ENCODE measurements at regions of chrX and their contacts with region 1.

Region 1: DNA sequence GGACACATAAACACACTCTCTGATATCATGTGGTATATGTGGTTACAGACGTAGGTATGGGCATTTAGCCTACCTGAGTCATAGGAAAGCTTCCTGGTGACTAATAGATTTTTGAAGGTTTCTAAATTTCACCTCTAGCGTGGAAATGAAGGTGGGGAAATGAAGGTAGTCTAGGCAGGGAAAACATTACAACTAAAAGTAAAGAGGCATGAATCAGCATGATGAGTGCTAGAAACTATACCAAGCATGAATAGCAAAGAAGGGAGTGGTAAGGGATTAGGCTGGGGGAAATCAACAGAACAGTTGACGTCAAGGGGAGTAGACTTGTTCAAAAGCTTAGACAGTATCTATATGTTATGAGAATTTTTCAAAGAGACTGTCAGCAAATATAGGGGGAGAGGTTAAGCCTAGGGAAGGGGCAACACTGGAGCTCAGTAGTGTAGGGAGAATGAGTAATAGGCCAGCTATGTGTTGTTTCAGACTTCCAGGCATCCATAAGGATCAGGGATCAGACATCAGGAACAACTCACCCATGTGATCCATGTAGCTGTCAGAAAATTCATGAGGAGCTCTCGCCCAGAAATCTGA is 279.3 kb upstream of the DIPK2B start:
- DNase-seq: peak; percentile 96
- ATAC-seq: peak; percentile 83
- H3K4me3 ChIP-seq: no peak overlapping the region
- H3K27ac ChIP-seq: peak overlapping the region; percentile 100
- H3K4me1 ChIP-seq: peaks cover 48% of the 10 kb centered on the region
- H3K27me3 ChIP-seq: no peaks in the 10 kb centered on the region
- CTCF ChIP-seq: no peak

Region 2: GRCh38 chrX:45186643-45187026 is 293.3 kb before region 1 on chrX:
- CTCF ChIA-PET with region 1: no interaction called
- POLR2A ChIA-PET with region 1: no interaction called
- intact Hi-C with region 1: no loop called
- DNase-seq: no peak
- ATAC-seq: no peak
- H3K4me3 ChIP-seq: peak overlapping the region; percentile 71
- H3K27ac ChIP-seq: peak overlapping the region; percentile 88
- H3K4me1 ChIP-seq: peaks cover 15% of the 10 kb centered on the region
- H3K27me3 ChIP-seq: no peaks in the 10 kb centered on the region
- CTCF ChIP-seq: no peak

Region 3: GRCh38 chrX:45505214-45505613 is 25.3 kb after region 1 on chrX:
- CTCF ChIA-PET with region 1: no interaction called
- POLR2A ChIA-PET with region 1: no interaction called
- intact Hi-C with region 1: loop called (anchors 2 kb)
- DNase-seq: peak; percentile 32
- ATAC-seq: no peak
- H3K4me3 ChIP-seq: no peak overlapping the region
- H3K27ac ChIP-seq: peak overlapping the region; percentile 100
- H3K4me1 ChIP-seq: peaks cover 43% of the 10 kb centered on the region
- H3K27me3 ChIP-seq: no peaks in the 10 kb centered on the region
- CTCF ChIP-seq: no peak

Region 4: DNA sequence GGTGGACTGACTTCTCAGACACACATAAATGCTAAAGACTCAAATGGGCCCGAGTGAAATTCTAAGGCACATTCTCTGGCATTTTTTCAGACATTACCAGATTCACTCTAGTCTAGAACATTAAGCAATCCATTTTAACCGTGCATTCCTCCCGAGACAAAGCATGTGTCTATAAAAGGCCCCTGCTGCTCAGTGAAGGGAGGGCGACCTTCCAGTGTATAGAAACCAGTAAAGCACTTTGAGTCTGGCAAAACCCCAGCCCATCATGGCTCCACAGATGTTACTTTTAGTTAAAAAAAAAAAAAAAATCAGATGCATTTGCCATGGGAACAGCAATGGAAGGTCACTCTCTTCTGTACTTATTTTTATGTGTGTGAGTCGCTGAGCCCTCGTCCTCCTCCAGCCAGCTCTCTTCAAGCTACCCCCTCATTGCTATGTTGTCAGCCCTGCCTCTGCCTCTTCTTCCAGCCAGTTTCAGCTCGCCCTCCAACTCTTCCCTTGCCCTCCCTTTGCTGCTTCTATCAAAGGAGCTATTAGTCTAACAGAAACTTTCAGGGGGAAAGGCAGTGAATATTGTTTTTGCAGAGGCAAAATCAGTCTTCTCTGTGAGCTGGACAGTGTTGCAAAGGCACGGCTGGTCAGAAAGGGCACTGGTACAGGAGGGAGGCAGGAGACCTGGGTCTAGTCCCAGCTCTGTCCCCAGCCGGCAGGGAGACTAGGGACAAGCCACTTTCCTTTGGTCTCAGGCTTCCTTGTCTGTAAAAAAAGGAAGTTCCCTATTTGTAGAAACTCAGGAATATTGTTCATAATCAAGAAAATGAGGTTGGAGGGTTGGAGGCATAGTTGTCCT is 421.1 kb after region 1 on chrX:
- CTCF ChIA-PET with region 1: no interaction called
- POLR2A ChIA-PET with region 1: no interaction called
- intact Hi-C with region 1: no loop called
- DNase-seq: no peak
- ATAC-seq: no peak
- H3K4me3 ChIP-seq: no peak overlapping the region
- H3K27ac ChIP-seq: no peak overlapping the region
- H3K4me1 ChIP-seq: no peaks in the 10 kb centered on the region
- H3K27me3 ChIP-seq: no peaks in the 10 kb centered on the region
- CTCF ChIP-seq: no peak